PC-9 (cell line): ENCODE measurements at regions of chr5 and their contacts with region 1.

Region 1: DNA sequence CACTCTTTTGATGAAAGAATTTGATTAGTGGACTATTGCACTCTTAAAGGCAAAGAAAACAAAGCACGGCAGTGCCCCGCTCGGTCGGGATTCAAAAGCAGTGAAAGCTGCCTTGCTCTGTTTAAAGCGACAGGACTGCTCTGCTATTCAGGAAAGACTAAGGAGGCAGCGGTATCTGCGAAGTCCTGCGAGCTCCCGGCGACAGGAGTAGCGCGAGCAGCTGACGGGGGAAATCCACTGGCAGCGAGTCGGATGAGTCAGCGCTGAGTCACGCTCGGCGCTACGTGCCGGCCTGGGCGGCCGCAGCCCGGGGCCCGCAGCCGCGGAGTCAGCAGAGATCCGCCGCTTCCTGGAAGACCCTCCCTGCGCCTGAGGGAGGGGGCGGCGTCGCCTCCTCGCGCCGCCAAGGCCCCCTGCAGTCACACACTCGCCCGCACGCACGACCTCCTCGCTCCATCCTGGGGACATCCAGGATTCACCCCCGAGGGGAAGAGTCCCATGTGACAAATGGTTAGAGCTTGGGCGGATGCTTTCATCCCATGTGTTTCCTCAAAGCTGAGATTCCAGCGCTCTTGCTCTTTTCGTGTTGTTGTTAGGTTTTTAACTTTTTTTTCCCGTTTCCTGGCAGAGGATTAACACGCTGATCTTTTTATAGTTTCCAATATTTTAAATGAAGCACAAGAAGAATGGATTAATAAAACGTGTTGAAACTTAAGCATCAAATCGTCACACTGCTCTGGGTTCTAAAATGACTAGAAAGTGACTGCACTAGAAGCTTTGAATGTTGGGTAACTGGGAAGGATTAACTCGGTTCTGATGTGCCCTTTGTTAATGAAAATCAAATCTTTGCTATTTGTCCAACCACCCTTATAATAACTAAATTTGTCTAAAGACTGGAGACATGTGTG is 102.5 kb downstream of the ARRDC3 start:
- DNase-seq: peak; percentile 94
- H3K4me3 ChIP-seq: peak overlapping the region; percentile 70
- H3K27ac ChIP-seq: peak overlapping the region; percentile 97
- H3K4me1 ChIP-seq: peaks cover 60% of the 10 kb centered on the region
- H3K27me3 ChIP-seq: no peaks in the 10 kb centered on the region
- CTCF ChIP-seq: 0 out of 2 replicates have a peak, but pooled peaks have one; percentile 22

Region 2: GRCh38 chr5:91162534-91163381 is 117.9 kb before region 1 on chr5:
- CTCF ChIA-PET with region 1: no interaction called
- POLR2A ChIA-PET with region 1: no interaction called
- intact Hi-C with region 1: loop called (anchors 2 kb)
- DNase-seq: peak; percentile 83 to 97
- H3K4me3 ChIP-seq: peak overlapping the region; percentile 32; the same call in 1 of the 2 replicates
- H3K27ac ChIP-seq: peak overlapping the region; percentile 78
- H3K4me1 ChIP-seq: peaks cover 60% of the 10 kb centered on the region
- H3K27me3 ChIP-seq: no peaks in the 10 kb centered on the region
- CTCF ChIP-seq: no peak

Region 3: GRCh38 chr5:91212714-91213092 is 67.9 kb before region 1 on chr5:
- CTCF ChIA-PET with region 1: no interaction called
- POLR2A ChIA-PET with region 1: no interaction called
- intact Hi-C with region 1: no loop called
- DNase-seq: no peak
- H3K4me3 ChIP-seq: no peak overlapping the region
- H3K27ac ChIP-seq: no peak overlapping the region
- H3K4me1 ChIP-seq: 0 out of 2 replicates have a peak, but pooled peaks cover 9% of the 10 kb centered on the region
- H3K27me3 ChIP-seq: no peaks in the 10 kb centered on the region
- CTCF ChIP-seq: no peak

Region 4: DNA sequence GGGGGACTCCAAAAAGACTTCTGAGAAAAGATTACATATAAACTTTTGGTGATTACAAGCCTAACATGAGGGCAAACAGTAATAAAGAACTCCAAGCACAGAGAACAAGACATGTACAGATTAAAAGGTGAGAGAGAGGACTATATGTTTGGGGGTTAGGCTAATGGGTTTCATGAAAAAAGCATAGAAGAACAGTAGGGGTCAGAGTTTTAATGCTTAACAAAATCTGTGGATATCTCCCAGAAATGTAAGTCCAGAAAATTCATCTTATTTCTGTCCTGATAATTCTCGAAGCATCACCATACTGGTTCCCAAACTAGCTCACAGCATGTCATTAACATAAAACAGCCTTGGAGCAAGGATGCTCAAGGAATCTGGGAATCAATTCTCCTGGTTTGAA is 34.7 kb before region 1 on chr5:
- CTCF ChIA-PET with region 1: interaction called, 11 read pairs
- POLR2A ChIA-PET with region 1: interaction called, 17 read pairs
- intact Hi-C with region 1: no loop called
- DNase-seq: no peak
- H3K4me3 ChIP-seq: no peak overlapping the region
- H3K27ac ChIP-seq: no peak overlapping the region
- H3K4me1 ChIP-seq: no peaks in the 10 kb centered on the region
- H3K27me3 ChIP-seq: no peaks in the 10 kb centered on the region
- CTCF ChIP-seq: no peak

Region 5: DNA sequence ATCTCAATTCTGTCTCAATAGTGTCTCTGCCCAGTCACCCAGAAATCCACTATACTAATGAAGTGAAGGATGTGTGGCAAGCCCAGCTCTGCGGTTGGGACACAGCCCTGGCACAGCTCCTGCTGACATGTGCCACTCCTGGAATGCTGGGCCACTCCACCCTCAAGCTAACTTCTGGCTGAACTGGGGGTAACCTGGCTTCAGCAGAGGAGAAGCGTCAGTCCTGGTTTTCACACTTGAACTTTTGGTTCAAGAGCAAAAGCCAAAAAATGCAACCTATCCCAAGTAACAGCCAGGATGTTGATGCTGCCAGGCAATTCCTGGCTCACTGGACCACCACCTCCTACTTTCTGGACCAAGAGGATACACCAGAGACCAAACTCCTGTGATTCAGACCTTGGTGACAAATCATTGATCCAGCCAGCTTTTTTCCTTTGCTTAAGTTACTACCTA is 16.1 kb after region 1 on chr5:
- CTCF ChIA-PET with region 1: interaction called, 4 read pairs
- POLR2A ChIA-PET with region 1: interaction called, 3 read pairs
- intact Hi-C with region 1: loop called (anchors 1 kb)
- DNase-seq: peak; percentile 84 to 94
- H3K4me3 ChIP-seq: peak overlapping the region; percentile 41; the same call in 1 of the 2 replicates
- H3K27ac ChIP-seq: peak overlapping the region; percentile 94
- H3K4me1 ChIP-seq: peaks cover 64% of the 10 kb centered on the region
- H3K27me3 ChIP-seq: no peaks in the 10 kb centered on the region
- CTCF ChIP-seq: no peak